MCF 10A (cell line): ENCODE measurements at regions of chr1 and their contacts with region 1.

Region 1: GRCh38 chr1:67535474-67535873 is 105.3 kb upstream of the SERBP1 start:
- DNase-seq: peak; percentile 85
- H3K4me3 Mint-ChIP-seq: no peak overlapping the region
- H3K27ac Mint-ChIP-seq: peak overlapping the region; percentile 12
- H3K4me1 Mint-ChIP-seq: peaks cover 6% of the 10 kb centered on the region
- H3K27me3 Mint-ChIP-seq: no peaks in the 10 kb centered on the region
- CTCF ChIP-seq: peak; percentile 95

Region 2: GRCh38 chr1:67524143-67525052 is 11.1 kb before region 1 on chr1:
- CTCF ChIA-PET with region 1: interaction called, 16 read pairs
- POLR2A ChIA-PET with region 1: no interaction called
- intact Hi-C with region 1: no loop called
- DNase-seq: no peak
- H3K4me3 Mint-ChIP-seq: no peak overlapping the region
- H3K27ac Mint-ChIP-seq: no peak overlapping the region
- H3K4me1 Mint-ChIP-seq: peaks cover 11% of the 10 kb centered on the region
- H3K27me3 Mint-ChIP-seq: no peaks in the 10 kb centered on the region
- CTCF ChIP-seq: peak; percentile 10

Region 3: DNA sequence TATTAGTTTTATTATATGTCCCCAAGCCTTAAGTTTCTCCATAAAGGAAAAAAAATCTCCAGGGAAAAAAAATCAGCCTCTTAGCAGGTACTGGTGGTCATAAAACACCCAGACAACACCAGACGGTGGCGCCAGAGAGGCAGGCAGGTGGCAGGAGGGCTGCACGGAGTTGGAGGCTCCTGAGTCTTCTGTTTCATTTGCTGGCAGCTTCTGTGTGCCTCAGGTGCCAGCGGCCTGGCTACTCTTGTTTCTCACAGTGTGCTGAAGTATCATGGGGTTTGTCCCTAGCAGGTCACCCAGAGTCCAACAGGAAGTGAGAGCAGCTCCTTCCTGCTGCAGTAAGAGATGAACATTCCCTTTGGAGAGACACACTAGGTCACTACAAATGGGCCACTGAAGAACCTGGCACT is 26.2 kb after region 1 on chr1:
- CTCF ChIA-PET with region 1: interaction called, 85 read pairs
- POLR2A ChIA-PET with region 1: interaction called, 5 read pairs
- intact Hi-C with region 1: loop called (anchors 1 kb)
- DNase-seq: peak; percentile 90
- H3K4me3 Mint-ChIP-seq: no peak overlapping the region
- H3K27ac Mint-ChIP-seq: no peak overlapping the region
- H3K4me1 Mint-ChIP-seq: peaks cover 6% of the 10 kb centered on the region
- H3K27me3 Mint-ChIP-seq: no peaks in the 10 kb centered on the region
- CTCF ChIP-seq: peak; percentile 95

Region 4: DNA sequence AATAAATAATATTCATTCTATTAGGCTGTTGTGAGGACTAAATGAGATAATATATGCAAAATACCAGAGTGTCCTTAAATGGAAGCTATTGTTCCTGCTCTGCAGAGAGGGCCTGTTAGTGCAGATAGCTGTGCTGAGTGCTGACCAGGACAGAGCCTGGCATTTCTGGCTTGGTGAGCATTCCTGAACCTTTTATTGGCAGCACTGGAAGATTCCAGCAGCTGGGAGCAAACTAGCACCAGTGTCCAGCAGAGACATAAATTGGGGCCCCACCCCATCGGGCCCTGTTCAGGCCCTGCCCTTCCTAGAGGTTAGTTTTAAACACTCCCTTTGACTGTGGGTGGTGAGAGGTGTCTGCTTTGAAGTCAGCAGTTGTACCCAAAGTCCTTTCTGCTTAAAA is 63.6 kb after region 1 on chr1:
- CTCF ChIA-PET with region 1: no interaction called
- POLR2A ChIA-PET with region 1: no interaction called
- intact Hi-C with region 1: no loop called
- DNase-seq: no peak
- H3K4me3 Mint-ChIP-seq: no peak overlapping the region
- H3K27ac Mint-ChIP-seq: no peak overlapping the region
- H3K4me1 Mint-ChIP-seq: no peaks in the 10 kb centered on the region
- H3K27me3 Mint-ChIP-seq: no peaks in the 10 kb centered on the region
- CTCF ChIP-seq: no peak

Region 5: DNA sequence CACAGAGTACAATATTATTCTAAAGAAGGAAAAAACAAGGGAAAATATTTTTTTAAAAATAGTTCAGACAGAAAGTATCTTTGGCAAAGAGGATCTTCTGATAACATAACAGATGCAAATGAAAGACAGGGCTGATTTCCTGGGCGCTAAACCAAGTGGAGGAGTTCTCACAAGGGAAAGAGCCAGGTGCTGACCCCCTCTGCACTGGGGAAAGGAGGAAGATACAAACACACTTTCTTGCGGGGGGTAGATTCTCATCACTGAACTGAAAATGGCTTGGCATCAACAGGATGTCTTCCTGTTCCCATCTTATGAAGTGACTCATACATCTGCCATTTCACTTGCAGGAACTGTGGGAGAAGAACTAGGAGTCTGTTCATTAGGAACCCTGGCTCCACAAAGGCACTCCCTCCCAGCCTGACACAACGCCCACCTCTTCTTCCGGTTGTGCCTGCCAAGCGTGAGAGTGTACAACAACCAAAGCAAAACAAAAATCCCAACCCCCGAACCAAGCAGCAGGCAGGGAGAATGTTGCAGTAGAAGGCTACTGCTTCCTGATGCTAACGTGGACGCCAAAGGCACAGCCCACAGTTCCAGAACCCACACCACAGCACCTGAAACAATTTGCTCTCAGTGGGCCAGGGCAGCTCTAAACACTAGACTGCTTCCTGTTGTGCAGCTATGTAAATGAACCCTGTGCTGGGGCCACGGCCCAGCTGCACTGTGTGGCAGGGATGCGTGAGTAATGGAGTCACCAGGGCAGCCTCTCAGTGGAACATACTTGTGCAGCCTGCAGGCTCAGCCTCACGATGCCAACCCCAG is 200.5 kb after region 1 on chr1:
- CTCF ChIA-PET with region 1: interaction called, 12 read pairs
- POLR2A ChIA-PET with region 1: no interaction called
- intact Hi-C with region 1: no loop called
- DNase-seq: peak; percentile 98
- H3K4me3 Mint-ChIP-seq: peak overlapping the region; percentile 64
- H3K27ac Mint-ChIP-seq: peak overlapping the region; percentile 96
- H3K4me1 Mint-ChIP-seq: peaks cover 34% of the 10 kb centered on the region
- H3K27me3 Mint-ChIP-seq: no peaks in the 10 kb centered on the region
- CTCF ChIP-seq: no peak

Region 6: GRCh38 chr1:67853704-67854103 is 318.2 kb after region 1 on chr1:
- CTCF ChIA-PET with region 1: interaction called, 8 read pairs
- POLR2A ChIA-PET with region 1: no interaction called
- intact Hi-C with region 1: loop called (anchors 1 kb)
- DNase-seq: peak; percentile 71
- H3K4me3 Mint-ChIP-seq: no peak overlapping the region
- H3K27ac Mint-ChIP-seq: no peak overlapping the region
- H3K4me1 Mint-ChIP-seq: peaks cover 16% of the 10 kb centered on the region
- H3K27me3 Mint-ChIP-seq: no peaks in the 10 kb centered on the region
- CTCF ChIP-seq: peak; percentile 92

Region 7: GRCh38 chr1:68111519-68112436 is 576.3 kb after region 1 on chr1:
- CTCF ChIA-PET with region 1: interaction called, 6 read pairs
- POLR2A ChIA-PET with region 1: interaction called, 4 read pairs
- intact Hi-C with region 1: loop called (anchors 1 kb)
- DNase-seq: peak; percentile 79
- H3K4me3 Mint-ChIP-seq: no peak overlapping the region
- H3K27ac Mint-ChIP-seq: no peak overlapping the region
- H3K4me1 Mint-ChIP-seq: peaks cover 19% of the 10 kb centered on the region
- H3K27me3 Mint-ChIP-seq: no peaks in the 10 kb centered on the region
- CTCF ChIP-seq: peak; percentile 65